ENCODE measurements at regions of chr10 and their contacts with region 1.

Region 1: GRCh38 chr10:65518379-65518778 is 1407.5 kb upstream of the LRRTM3 start:
- DNase-seq: no peak
- ATAC-seq: no peak
- H3K4me3 ChIP-seq: no peak overlapping the region
- H3K27ac ChIP-seq: no peak overlapping the region
- H3K4me1 ChIP-seq: no peaks in the 10 kb centered on the region
- H3K27me3 ChIP-seq: no peaks in the 10 kb centered on the region
- CTCF ChIP-seq: no peak

Region 2: DNA sequence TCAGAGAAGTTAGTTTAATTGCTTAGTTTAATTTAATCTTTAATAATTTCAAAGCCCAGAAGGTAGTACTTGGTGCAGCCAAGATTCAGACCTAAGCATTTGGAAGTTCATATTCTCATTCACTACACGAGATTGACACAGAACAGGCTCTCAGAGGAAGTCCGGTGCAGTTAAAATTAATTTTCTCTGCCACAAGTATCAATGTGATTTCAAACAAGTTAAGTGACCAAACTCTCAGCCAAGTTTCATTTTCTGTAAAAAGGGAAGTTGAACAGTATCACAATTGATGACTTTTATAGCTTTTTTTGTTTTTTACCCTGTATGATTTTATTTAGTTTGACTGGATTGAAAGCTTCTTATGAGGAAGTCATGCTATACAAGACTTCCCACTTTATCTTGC is 87.4 kb before region 1 on chr10:
- intact Hi-C with region 1: no loop called
- DNase-seq: no peak
- ATAC-seq: no peak
- H3K4me3 ChIP-seq: no peak overlapping the region
- H3K27ac ChIP-seq: no peak overlapping the region
- H3K4me1 ChIP-seq: no peaks in the 10 kb centered on the region
- H3K27me3 ChIP-seq: no peaks in the 10 kb centered on the region
- CTCF ChIP-seq: no peak

Region 3: GRCh38 chr10:65470986-65471385 is 47.4 kb before region 1 on chr10:
- intact Hi-C with region 1: no loop called
- DNase-seq: no peak
- ATAC-seq: no peak
- H3K4me3 ChIP-seq: no peak overlapping the region
- H3K27ac ChIP-seq: no peak overlapping the region
- H3K4me1 ChIP-seq: no peaks in the 10 kb centered on the region
- H3K27me3 ChIP-seq: no peaks in the 10 kb centered on the region
- CTCF ChIP-seq: no peak

Region 4: GRCh38 chr10:65534771-65535170 is 16.4 kb after region 1 on chr10:
- intact Hi-C with region 1: loop called in 1 of 10 experiments (anchors 1 kb)
- DNase-seq: no peak
- ATAC-seq: no peak
- H3K4me3 ChIP-seq: no peak overlapping the region
- H3K27ac ChIP-seq: no peak overlapping the region
- H3K4me1 ChIP-seq: no peaks in the 10 kb centered on the region
- H3K27me3 ChIP-seq: no peaks in the 10 kb centered on the region
- CTCF ChIP-seq: no peak

Region 5: DNA sequence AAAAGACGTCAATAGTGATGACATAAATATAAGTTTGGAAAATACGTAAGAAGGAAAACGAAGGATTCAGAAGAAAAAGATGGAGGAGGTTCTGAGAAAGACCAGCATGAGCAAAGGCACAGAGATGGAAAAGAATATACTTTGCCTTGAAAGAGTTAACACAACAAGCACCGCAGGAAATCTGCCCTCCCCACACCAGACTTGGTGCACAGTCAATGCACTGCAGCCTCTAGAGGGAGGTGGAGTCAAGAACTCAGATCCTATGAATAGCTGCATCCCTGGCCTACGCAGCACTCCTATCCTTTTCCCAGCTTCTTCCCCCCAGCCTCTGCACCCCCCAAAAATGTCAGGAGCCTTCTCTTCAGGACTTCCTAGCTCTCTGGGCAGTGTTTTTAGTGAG is 36.8 kb after region 1 on chr10:
- intact Hi-C with region 1: no loop called
- DNase-seq: no peak
- ATAC-seq: no peak
- H3K4me3 ChIP-seq: no peak overlapping the region
- H3K27ac ChIP-seq: no peak overlapping the region
- H3K4me1 ChIP-seq: no peaks in the 10 kb centered on the region
- H3K27me3 ChIP-seq: no peaks in the 10 kb centered on the region
- CTCF ChIP-seq: no peak

Measured in heart right ventricle (tissue), 16 donors.